ENCODE measurements at regions of chr2 and their contacts with region 1.

Region 1: DNA sequence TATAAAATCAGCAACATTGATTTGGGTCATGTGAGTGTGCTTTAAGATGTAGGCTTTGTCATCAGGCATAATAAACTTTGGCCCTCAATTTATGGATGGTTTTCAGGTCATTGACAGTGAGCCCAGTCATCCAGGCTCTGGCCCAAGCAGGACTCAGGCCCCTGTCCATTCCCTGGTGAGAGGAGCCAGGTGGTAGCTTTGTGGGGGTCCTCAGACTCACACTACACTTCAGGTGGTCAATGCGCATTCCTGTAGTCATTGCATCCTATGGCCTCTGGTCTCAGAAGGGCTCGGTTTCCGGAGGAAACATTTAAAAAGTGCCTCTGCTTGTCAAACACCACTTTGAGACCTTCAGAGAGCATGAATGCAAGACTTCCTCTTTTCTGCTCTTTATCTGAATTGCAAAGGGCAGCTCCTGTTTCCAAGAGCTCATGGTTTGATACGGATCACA is 20.2 kb downstream of the LGALSL start:
- DNase-seq: peak; percentile 26
- CTCF ChIP-seq: no peak

Region 2: GRCh38 chr2:64439194-64439593 is 35.0 kb before region 1 on chr2:
- CTCF ChIA-PET with region 1: no interaction called
- POLR2A ChIA-PET with region 1: no interaction called
- DNase-seq: no peak
- CTCF ChIP-seq: no peak

Region 3: DNA sequence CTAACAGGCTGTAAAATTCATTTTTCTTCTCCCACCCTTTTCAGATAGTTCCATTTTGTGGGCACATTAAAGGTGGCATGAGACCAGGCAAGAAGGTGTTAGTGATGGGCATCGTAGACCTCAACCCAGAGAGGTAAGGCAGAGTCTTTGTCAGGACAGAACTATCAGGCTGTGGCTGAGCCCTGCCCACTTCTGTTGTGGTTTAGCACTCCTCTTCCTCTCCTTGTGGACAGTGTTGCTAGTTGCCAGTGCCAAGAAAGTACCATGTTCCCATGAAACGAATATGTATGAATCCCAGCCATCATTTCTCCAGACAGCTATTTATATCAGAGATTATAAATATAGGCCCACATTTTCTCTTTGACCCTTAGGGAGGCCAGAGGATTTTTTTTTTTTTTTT is 18.6 kb before region 1 on chr2:
- CTCF ChIA-PET with region 1: interaction called, 17 read pairs
- POLR2A ChIA-PET with region 1: interaction called, 6 read pairs
- DNase-seq: no peak
- CTCF ChIP-seq: no peak

Region 4: GRCh38 chr2:64574871-64575270 is 100.7 kb after region 1 on chr2:
- CTCF ChIA-PET with region 1: no interaction called
- POLR2A ChIA-PET with region 1: no interaction called
- DNase-seq: no peak
- CTCF ChIP-seq: no peak

Measured in GM10248 (cell line).